Heart right ventricle (tissue), 16 donors: ENCODE measurements at regions of chr7 and their contacts with region 1.

Region 1: DNA sequence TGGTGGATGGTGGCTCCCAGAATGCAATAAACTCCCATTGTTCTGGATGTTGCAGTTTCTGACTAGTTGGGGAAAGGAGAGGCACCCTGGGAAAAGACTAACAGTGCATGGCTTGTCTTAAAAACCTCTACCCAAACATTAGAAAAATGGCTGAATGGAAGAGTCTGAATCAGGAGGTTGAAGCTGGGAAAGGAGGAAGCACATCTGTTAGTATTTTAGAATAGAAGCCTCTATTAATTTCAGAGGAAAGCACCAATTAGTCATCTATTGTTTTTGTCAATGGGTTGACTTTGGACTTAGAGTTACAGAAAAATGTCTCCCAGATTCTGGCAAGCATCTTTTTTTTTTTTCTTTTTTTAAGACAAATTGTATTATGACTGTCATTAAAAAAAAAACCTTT is 56.1 kb upstream of the ELMO1 start:
- DNase-seq: no peak
- ATAC-seq: peak in 4 of 8 donors; percentile 35 to 64 (median 60)
- H3K4me3 ChIP-seq: no peak overlapping the region
- H3K27ac ChIP-seq: peak overlapping the region in 1 of 10 donors; percentile 32
- H3K4me1 ChIP-seq: peaks cover 0 to 21% (median 0%) of the 10 kb centered on the region in 9 donors
- H3K27me3 ChIP-seq: no peaks in the 10 kb centered on the region
- CTCF ChIP-seq: no peak

Region 2: DNA sequence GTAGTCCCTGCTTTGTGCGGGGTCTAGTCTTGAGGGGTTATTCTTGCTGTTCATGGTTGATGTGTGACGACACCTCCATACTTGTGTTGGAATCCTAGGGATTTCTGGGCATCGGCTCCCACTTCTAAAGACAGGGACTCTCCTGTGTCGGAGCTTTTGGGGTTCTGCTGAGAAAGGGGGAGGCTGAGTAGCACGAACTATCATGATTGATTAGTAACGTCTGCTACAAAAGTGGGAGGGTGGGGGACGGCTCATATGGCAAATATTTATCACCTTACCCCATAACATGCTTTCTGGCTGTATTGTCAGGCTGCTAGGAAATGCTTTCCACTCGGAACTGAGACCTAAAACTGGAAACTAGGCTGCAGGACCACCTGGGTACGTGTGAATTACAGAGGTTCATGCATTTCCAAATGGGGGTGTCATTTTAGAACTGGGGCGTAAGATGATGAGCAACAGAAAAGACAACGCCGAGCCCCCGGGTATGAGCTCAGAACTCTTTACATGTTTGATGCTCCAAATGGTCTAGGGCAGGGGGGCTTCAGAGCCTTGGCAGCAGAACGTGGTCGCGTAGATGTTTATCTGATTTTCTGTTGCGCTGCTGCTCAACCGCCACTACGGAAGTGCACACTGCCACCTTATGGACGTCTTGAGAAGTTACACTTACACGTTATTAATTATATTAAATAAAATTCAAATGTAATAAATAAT is 328.5 kb after region 1 on chr7:
- intact Hi-C with region 1: loop called in 1 of 10 experiments (anchors 10 kb)
- DNase-seq: peak; percentile 17 to 19
- ATAC-seq: peak in 3 of 8 donors; percentile 33 to 61 (median 40)
- H3K4me3 ChIP-seq: peak overlapping the region in 7 of 10 donors; percentile 7 to 48 (median 40)
- H3K27ac ChIP-seq: no peak overlapping the region
- H3K4me1 ChIP-seq: peaks cover 0 to 18% (median 5%) of the 10 kb centered on the region in 9 donors
- H3K27me3 ChIP-seq: peaks cover 0 to 7% (median 0%) of the 10 kb centered on the region in 7 donors
- CTCF ChIP-seq: peak; percentile 66 to 86 (median 76)